ENCODE measurements at regions of chr5 and their contacts with region 1.

Region 1: DNA sequence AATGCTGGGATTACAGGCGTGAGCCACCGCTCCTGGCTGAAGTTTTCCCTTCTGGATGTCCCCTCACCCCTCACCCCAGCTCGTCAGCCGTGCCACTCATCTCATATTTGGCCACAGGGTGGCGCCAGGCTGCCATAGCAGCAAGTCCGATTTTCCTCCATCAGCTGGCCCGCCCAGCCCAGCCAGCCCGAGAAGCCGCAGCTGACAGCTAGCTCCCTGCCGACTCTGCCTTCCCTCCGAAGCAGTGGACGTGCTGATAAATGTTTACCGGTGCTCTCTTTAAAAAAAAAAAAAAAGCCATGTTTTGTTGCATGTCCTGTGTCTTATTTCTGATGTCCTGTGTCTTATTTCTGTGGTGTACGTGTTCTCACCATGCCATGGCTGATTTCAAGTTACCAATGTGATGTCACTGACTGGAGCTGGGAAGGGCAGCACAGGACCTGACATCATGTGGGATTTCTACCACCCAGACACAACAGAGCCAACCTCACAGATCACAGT is 58.3 kb downstream of the PFDN1 start:
- DNase-seq: peak; percentile 84 to 88 (median 86)
- H3K4me3 ChIP-seq: peak overlapping the region in 1 of 3 experiments; percentile 48
- H3K4me3 Mint-ChIP-seq: peak overlapping the region; percentile 60 to 63
- H3K27ac ChIP-seq: peak overlapping the region in 1 of 2 donors; percentile 63
- H3K27ac Mint-ChIP-seq: peak overlapping the region; percentile 73 to 96 (median 89)
- H3K4me1 ChIP-seq: peaks cover 21 to 25% of the 10 kb centered on the region in 2 donors
- H3K4me1 Mint-ChIP-seq: peaks cover 35% of the 10 kb centered on the region
- H3K27me3 ChIP-seq: no peaks in the 10 kb centered on the region
- H3K27me3 Mint-ChIP-seq: peaks cover 0 to 2% (median 0%) of the 10 kb centered on the region in 3 donors
- CTCF ChIP-seq: peak; percentile 89

Region 2: DNA sequence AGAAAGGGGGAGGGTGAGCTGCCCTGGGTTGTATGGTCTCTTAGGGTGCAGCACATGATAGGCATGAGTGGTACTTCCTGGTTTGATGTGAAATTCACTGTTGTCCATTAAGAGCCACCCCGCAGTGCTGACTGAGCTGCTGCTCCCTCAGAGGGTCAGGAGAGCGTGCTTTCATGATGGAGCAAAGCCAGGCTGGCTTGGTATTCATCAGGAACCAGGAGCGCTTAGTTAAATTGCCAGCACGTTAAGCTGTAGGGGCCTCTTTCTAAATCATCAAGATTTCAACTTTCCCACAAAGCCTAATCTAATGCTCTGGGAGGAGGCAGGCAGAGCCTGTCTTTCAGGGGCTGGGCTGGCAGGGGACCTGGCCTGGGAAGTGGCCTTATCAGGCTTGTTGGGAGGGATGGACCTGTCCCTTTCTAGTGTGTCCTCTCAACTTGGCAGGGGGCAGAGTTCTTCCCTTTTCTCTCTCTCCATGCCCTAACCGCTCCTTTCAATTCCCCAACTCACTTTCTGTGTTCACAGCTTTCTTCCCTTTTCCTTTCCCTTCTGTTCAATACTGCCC is 61.7 kb before region 1 on chr5:
- intact Hi-C with region 1: loop called in 1 of 2 experiments (anchors 10 kb)
- DNase-seq: peak; percentile 44 to 48 (median 46)
- H3K4me3 ChIP-seq: peak overlapping the region in 1 of 3 experiments; percentile 42
- H3K4me3 Mint-ChIP-seq: peak overlapping the region; percentile 21 to 62
- H3K27ac ChIP-seq: peak overlapping the region; percentile 37 to 58
- H3K27ac Mint-ChIP-seq: peak overlapping the region; percentile 43 to 92 (median 81)
- H3K4me1 ChIP-seq: peaks cover 33 to 37% of the 10 kb centered on the region in 2 donors
- H3K4me1 Mint-ChIP-seq: peaks cover 31% of the 10 kb centered on the region
- H3K27me3 ChIP-seq: no peaks in the 10 kb centered on the region
- H3K27me3 Mint-ChIP-seq: no peaks in the 10 kb centered on the region
- CTCF ChIP-seq: no peak

Region 3: GRCh38 chr5:140261403-140262171 is 17.0 kb after region 1 on chr5:
- intact Hi-C with region 1: loop called in 1 of 2 experiments (anchors 2 kb)
- DNase-seq: peak; percentile 96 to 98 (median 97)
- H3K4me3 ChIP-seq: no peak overlapping the region
- H3K4me3 Mint-ChIP-seq: no peak overlapping the region
- H3K27ac ChIP-seq: peak overlapping the region; percentile 30 to 62
- H3K27ac Mint-ChIP-seq: peak overlapping the region; percentile 88 to 96 (median 93)
- H3K4me1 ChIP-seq: peaks cover 13 to 22% of the 10 kb centered on the region in 2 donors
- H3K4me1 Mint-ChIP-seq: peaks cover 40% of the 10 kb centered on the region
- H3K27me3 ChIP-seq: no peaks in the 10 kb centered on the region
- H3K27me3 Mint-ChIP-seq: peaks cover 0 to 3% (median 1%) of the 10 kb centered on the region in 3 donors
- CTCF ChIP-seq: no peak

Region 4: GRCh38 chr5:140287801-140288521 is 43.4 kb after region 1 on chr5:
- intact Hi-C with region 1: loop called (anchors 5 kb)
- DNase-seq: no peak
- H3K4me3 ChIP-seq: no peak overlapping the region
- H3K4me3 Mint-ChIP-seq: no peak overlapping the region
- H3K27ac ChIP-seq: no peak overlapping the region
- H3K27ac Mint-ChIP-seq: peak overlapping the region in 1 of 7 donors; percentile 19
- H3K4me1 ChIP-seq: peaks cover 20 to 22% of the 10 kb centered on the region in 2 donors
- H3K4me1 Mint-ChIP-seq: peaks cover 24% of the 10 kb centered on the region
- H3K27me3 ChIP-seq: no peaks in the 10 kb centered on the region
- H3K27me3 Mint-ChIP-seq: no peaks in the 10 kb centered on the region
- CTCF ChIP-seq: no peak

Region 5: DNA sequence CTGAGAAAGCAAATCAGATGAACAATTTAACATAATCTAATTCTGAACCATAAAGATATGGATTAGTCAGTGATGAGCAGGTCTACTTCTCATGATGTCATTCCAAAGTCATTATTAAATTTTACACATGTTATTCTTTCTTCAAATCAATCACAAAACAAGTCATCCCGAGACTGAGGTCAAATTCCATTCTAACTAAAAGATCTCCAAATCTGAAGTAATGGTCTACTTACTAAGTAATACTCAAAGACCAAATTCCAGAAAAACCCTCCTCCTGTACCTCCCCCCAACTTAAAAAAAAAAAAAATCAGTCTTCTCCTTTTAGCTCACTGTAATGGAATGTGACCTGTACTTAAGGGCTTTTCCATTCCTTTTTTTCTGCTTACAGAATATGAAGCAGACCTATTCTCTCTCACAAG is 53.6 kb after region 1 on chr5:
- intact Hi-C with region 1: no loop called
- DNase-seq: no peak
- H3K4me3 ChIP-seq: no peak overlapping the region
- H3K4me3 Mint-ChIP-seq: no peak overlapping the region
- H3K27ac ChIP-seq: no peak overlapping the region
- H3K27ac Mint-ChIP-seq: peak overlapping the region in 1 of 7 donors; percentile 12
- H3K4me1 ChIP-seq: peaks cover 18 to 40% of the 10 kb centered on the region in 2 donors
- H3K4me1 Mint-ChIP-seq: peaks cover 48% of the 10 kb centered on the region
- H3K27me3 ChIP-seq: no peaks in the 10 kb centered on the region
- H3K27me3 Mint-ChIP-seq: no peaks in the 10 kb centered on the region
- CTCF ChIP-seq: no peak

Region 6: GRCh38 chr5:140351609-140352334 is 107.2 kb after region 1 on chr5:
- intact Hi-C with region 1: loop called in 1 of 2 experiments (anchors 2 kb)
- DNase-seq: peak; percentile 64 to 85 (median 72)
- H3K4me3 ChIP-seq: no peak overlapping the region
- H3K4me3 Mint-ChIP-seq: no peak overlapping the region
- H3K27ac ChIP-seq: no peak overlapping the region
- H3K27ac Mint-ChIP-seq: no peak overlapping the region
- H3K4me1 ChIP-seq: peaks cover 32 to 44% of the 10 kb centered on the region in 2 donors
- H3K4me1 Mint-ChIP-seq: peaks cover 37% of the 10 kb centered on the region
- H3K27me3 ChIP-seq: no peaks in the 10 kb centered on the region
- H3K27me3 Mint-ChIP-seq: peaks cover 0 to 5% (median 5%) of the 10 kb centered on the region in 3 donors
- CTCF ChIP-seq: peak; percentile 94

Region 7: DNA sequence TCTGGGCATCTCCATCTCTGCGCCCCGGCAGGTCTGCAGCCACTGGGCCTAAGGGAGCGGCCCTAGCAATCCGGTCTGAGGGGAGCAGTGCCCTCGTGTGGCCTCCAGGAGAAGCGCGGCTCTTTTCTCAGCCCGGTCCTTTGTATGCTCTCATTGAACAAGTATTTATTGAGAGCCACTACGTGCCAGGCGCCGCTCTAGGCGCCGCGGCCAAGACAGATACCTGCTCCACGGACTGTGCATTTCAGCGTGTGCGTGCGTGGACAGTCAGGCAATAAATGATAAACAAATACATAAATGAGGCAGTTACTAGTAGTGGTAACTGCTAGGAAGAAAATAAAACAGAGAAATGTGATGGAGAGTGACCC is 113.1 kb after region 1 on chr5:
- intact Hi-C with region 1: loop called in 1 of 2 experiments (anchors 1 kb)
- DNase-seq: peak; percentile 73 to 83 (median 80)
- H3K4me3 ChIP-seq: peak overlapping the region in 1 of 3 experiments; percentile 34
- H3K4me3 Mint-ChIP-seq: peak overlapping the region; percentile 62 to 82
- H3K27ac ChIP-seq: no peak overlapping the region
- H3K27ac Mint-ChIP-seq: peak overlapping the region; percentile 36 to 91 (median 76)
- H3K4me1 ChIP-seq: peaks cover 31 to 36% of the 10 kb centered on the region in 2 donors
- H3K4me1 Mint-ChIP-seq: peaks cover 31% of the 10 kb centered on the region
- H3K27me3 ChIP-seq: no peaks in the 10 kb centered on the region
- H3K27me3 Mint-ChIP-seq: peaks cover 2 to 6% (median 6%) of the 10 kb centered on the region in 3 donors
- CTCF ChIP-seq: peak; percentile 89

Measured in CD14-positive monocyte (primary cell).